Activated naive CD4-positive, alpha-beta T cell treated with anti-CD3 and anti-CD28 coated beads for 36 hours (primary cell): ENCODE measurements at regions of chr15 and their contacts with region 1.

Region 1: GRCh38 chr15:52780172-52780980 is 9.8 kb downstream of the ONECUT1 start:
- DNase-seq: peak; percentile 83
- H3K4me3 Mint-ChIP-seq: no peak overlapping the region
- H3K27ac Mint-ChIP-seq: no peak overlapping the region
- H3K4me1 Mint-ChIP-seq: peaks cover 24% of the 10 kb centered on the region
- H3K27me3 Mint-ChIP-seq: peaks cover 65% of the 10 kb centered on the region

Region 2: GRCh38 chr15:52960283-52960682 is 179.9 kb after region 1 on chr15:
- CTCF ChIA-PET with region 1: no interaction called
- intact Hi-C with region 1: loop called (anchors 10 kb)
- DNase-seq: no peak
- H3K4me3 Mint-ChIP-seq: no peak overlapping the region
- H3K27ac Mint-ChIP-seq: no peak overlapping the region
- H3K4me1 Mint-ChIP-seq: no peaks in the 10 kb centered on the region
- H3K27me3 Mint-ChIP-seq: peaks cover 12% of the 10 kb centered on the region

Region 3: DNA sequence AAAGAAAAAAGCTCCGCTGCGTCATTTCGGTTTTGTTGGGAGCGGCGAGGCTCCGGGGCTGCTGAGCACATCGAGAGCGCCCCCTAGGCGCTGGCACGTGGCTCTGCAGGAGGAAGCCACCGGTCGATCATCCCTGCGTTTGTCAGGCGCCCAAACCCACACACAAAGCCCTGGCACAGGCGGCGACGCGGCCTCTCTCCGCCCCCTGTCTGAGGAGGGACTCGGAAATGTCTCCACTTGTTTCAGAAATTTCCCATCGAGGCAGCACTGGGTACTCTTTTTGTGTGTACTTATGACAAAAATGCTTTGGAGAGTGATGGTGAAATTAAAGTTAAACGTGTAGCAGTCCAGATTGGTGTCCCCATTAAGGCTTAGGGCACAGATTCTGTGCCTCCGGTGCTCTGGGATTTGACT is 417.1 kb after region 1 on chr15:
- CTCF ChIA-PET with region 1: interaction called, 5 read pairs
- intact Hi-C with region 1: loop called (anchors 1 kb)
- DNase-seq: peak; percentile 59
- H3K4me3 Mint-ChIP-seq: no peak overlapping the region
- H3K27ac Mint-ChIP-seq: no peak overlapping the region
- H3K4me1 Mint-ChIP-seq: no peaks in the 10 kb centered on the region
- H3K27me3 Mint-ChIP-seq: peaks cover 29% of the 10 kb centered on the region

Region 4: DNA sequence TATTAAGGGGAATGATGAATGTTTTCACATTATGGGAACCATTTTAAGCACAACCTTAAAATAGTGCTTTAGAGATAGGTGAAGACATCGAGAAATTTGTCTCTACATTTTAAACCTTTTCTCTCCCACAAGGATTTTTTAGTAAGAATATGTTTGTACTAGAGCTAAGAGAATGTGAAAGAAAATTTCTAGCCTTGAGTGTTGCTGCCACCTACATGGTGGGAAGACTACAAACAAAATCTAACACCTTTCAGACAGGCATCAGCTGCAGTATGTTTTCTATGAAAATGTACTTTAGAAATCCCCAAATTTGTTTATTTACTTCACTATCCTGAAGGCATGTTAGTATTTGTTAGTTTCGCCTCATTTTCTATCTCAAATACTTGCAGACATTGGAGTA is 731.7 kb after region 1 on chr15:
- CTCF ChIA-PET with region 1: no interaction called
- intact Hi-C with region 1: loop called (anchors 10 kb)
- DNase-seq: no peak
- H3K4me3 Mint-ChIP-seq: no peak overlapping the region
- H3K27ac Mint-ChIP-seq: no peak overlapping the region
- H3K4me1 Mint-ChIP-seq: no peaks in the 10 kb centered on the region
- H3K27me3 Mint-ChIP-seq: peaks cover 3% of the 10 kb centered on the region

Region 5: GRCh38 chr15:53586799-53587198 is 806.4 kb after region 1 on chr15:
- CTCF ChIA-PET with region 1: no interaction called
- intact Hi-C with region 1: loop called (anchors 5 kb)
- DNase-seq: peak; percentile 43
- H3K4me3 Mint-ChIP-seq: no peak overlapping the region
- H3K27ac Mint-ChIP-seq: no peak overlapping the region
- H3K4me1 Mint-ChIP-seq: no peaks in the 10 kb centered on the region
- H3K27me3 Mint-ChIP-seq: peaks cover 2% of the 10 kb centered on the region

Region 6: DNA sequence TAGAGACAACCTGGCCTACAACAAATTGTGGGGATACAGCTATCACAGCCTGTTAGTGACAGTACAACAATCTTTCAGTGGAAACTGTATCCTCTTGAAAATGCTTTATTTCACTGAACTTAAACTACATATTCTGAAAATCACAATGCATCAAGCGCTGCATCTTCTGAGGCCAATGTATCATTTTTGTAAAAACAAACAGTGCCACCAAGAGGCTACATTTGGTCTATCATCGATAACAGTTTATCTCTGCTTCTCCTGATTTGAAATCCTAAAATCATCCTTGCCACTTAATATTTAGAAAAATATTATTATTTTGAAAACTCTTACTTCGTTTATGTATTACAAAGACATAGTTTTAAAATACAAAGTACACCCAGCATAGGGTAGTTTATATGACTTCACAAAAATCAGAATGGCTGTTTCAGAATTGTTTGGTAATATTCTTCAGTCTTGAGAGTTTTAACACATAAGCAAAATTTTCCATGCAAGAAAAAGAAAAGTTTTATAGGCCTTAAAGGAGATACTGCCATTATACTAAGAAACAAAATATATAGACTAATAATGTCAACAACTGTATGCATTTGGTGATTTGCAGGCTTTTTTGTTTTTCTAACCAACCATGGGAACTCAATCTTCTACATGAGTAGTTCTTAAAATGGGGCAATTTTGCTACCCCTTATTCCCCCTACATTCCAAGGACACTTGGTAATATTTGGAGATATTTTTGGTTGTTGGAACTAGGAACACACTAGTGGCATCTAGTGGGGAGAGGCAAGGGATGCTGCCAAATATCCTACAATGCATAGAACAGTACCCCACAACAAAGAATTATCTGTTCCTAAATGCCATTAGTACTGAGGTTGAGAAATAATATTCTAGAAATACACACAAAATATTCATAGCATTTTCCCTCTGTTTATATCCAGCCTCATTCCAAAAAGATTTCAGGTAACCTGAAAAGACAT is 936.8 kb after region 1 on chr15:
- CTCF ChIA-PET with region 1: no interaction called
- intact Hi-C with region 1: loop called (anchors 1 kb)
- DNase-seq: no peak
- H3K4me3 Mint-ChIP-seq: no peak overlapping the region
- H3K27ac Mint-ChIP-seq: no peak overlapping the region
- H3K4me1 Mint-ChIP-seq: no peaks in the 10 kb centered on the region
- H3K27me3 Mint-ChIP-seq: peaks cover 3% of the 10 kb centered on the region